ENCODE measurements at regions of chr7 and their contacts with region 1.

Region 1: GRCh38 chr7:44293561-44294324 is 31.7 kb downstream of the CAMK2B start:
- DNase-seq: peak in 1 of 2 donors; percentile 8
- H3K4me3 ChIP-seq: no peak overlapping the region
- H3K27ac ChIP-seq: no peak overlapping the region
- H3K4me1 ChIP-seq: no peaks in the 10 kb centered on the region
- H3K27me3 ChIP-seq: peaks cover 0 to 13% of the 10 kb centered on the region in 2 donors
- CTCF ChIP-seq: no peak
- POLR2A ChIP-seq: no peak

Region 2: GRCh38 chr7:42714356-42714755 is 1579.4 kb before region 1 on chr7:
- intact Hi-C with region 1: no loop called
- DNase-seq: no peak
- H3K4me3 ChIP-seq: no peak overlapping the region
- H3K27ac ChIP-seq: no peak overlapping the region
- H3K4me1 ChIP-seq: no peaks in the 10 kb centered on the region
- H3K27me3 ChIP-seq: no peaks in the 10 kb centered on the region
- CTCF ChIP-seq: no peak
- POLR2A ChIP-seq: no peak

Region 3: GRCh38 chr7:44251881-44252280 is 41.9 kb before region 1 on chr7:
- intact Hi-C with region 1: loop called (anchors 1 kb)
- DNase-seq: no peak
- H3K4me3 ChIP-seq: no peak overlapping the region
- H3K27ac ChIP-seq: no peak overlapping the region
- H3K4me1 ChIP-seq: no peaks in the 10 kb centered on the region
- H3K27me3 ChIP-seq: no peaks in the 10 kb centered on the region
- CTCF ChIP-seq: no peak
- POLR2A ChIP-seq: no peak

Measured in breast epithelium (tissue), 4 donors.